ENCODE measurements at regions of chr10 and their contacts with region 1.

Region 1: DNA sequence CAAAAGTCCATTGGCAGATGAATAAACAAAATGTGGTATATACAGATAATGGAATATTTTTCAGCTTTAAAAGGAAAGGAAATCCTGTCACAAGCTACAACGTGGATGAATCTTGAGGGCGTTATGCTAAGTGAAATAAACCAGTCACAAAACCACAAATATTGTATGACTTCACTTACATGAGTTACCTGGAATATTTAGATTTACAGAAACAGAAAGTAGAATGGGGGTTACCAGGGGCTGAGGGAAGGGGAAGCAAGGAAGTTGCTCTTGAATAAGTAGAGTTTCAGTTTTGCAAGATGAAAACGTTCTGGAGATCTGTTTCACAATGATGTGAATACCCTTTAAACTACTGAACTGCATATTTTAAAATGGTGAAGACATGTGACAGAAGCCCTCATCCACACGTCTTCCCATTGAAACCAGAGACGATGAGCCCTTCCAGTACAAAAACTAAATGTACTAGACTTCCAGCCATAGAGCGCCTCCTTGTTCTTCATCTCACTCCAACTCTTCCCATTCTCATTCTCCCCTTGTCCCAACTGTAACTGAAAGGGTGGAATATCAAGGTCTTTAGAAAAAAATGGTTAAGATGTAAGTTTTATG is 62.4 kb downstream of the MICU1 start:
- DNase-seq: no peak
- ATAC-seq: no peak
- H3K4me3 ChIP-seq: no peak overlapping the region
- H3K27ac ChIP-seq: no peak overlapping the region
- H3K4me1 ChIP-seq: peaks cover 6% of the 10 kb centered on the region; the same call in 1 of the 2 replicates
- H3K27me3 ChIP-seq: no peaks in the 10 kb centered on the region
- CTCF ChIP-seq: no peak
- POLR2A ChIP-seq: no peak
- RAD21 ChIP-seq: no peak

Region 2: DNA sequence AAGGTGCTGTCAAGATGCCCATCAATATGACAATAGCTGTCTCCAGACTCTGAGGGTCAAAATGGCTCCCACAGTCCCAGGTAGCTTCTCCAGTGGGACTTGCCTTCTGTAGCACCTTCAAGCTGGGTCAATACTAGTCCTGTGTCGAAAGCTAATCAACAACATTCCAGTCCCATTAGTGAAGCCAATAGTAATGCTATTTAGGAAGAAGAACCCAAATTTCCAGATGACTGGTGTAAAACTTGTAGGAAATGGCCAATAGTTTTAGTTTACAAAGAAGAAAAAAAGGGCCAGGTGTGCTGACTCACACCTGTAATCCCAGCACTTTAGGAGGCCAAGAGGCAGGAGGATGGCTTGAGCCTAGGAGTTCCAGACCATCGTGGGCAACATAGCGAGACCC is 473.1 kb before region 1 on chr10:
- CTCF ChIA-PET with region 1: interaction called, 10 read pairs
- POLR2A ChIA-PET with region 1: no interaction called
- dilution Hi-C with region 1: no loop called
- in situ Hi-C with region 1: no loop called
- intact Hi-C with region 1: no loop called
- DNase-seq: no peak
- ATAC-seq: no peak
- H3K4me3 ChIP-seq: no peak overlapping the region
- H3K27ac ChIP-seq: no peak overlapping the region
- H3K4me1 ChIP-seq: peaks cover 5% of the 10 kb centered on the region; the same call in 1 of the 2 replicates
- H3K27me3 ChIP-seq: peaks cover 49% of the 10 kb centered on the region
- CTCF ChIP-seq: no peak
- POLR2A ChIP-seq: no peak
- RAD21 ChIP-seq: no peak

Region 3: GRCh38 chr10:72503241-72503640 is 60.2 kb before region 1 on chr10:
- CTCF ChIA-PET with region 1: no interaction called
- POLR2A ChIA-PET with region 1: no interaction called
- dilution Hi-C with region 1: no loop called
- in situ Hi-C with region 1: no loop called
- intact Hi-C with region 1: no loop called
- DNase-seq: peak; percentile 69
- ATAC-seq: peak; percentile 98
- H3K4me3 ChIP-seq: no peak overlapping the region
- H3K27ac ChIP-seq: no peak overlapping the region
- H3K4me1 ChIP-seq: peaks cover 3% of the 10 kb centered on the region
- H3K27me3 ChIP-seq: no peaks in the 10 kb centered on the region
- CTCF ChIP-seq: no peak
- POLR2A ChIP-seq: no peak
- RAD21 ChIP-seq: no peak